ENCODE measurements at regions of chr20 and their contacts with region 1.

Region 1: GRCh38 chr20:10225439-10226060 is 6.9 kb downstream of the SNAP25 start:
- DNase-seq: no peak
- H3K4me3 ChIP-seq: no peak overlapping the region
- H3K27ac ChIP-seq: no peak overlapping the region
- H3K4me1 ChIP-seq: no peaks in the 10 kb centered on the region; a peak in 1 of 7 replicates
- H3K27me3 ChIP-seq: no peaks in the 10 kb centered on the region
- CTCF ChIP-seq: peak in 2 of 3 experiments; percentile 58 to 60; a peak in 3 of 4 replicates
- EP300 ChIP-seq: no peak
- POLR2A ChIP-seq: no peak
- RAD21 ChIP-seq: peak; percentile 63 to 71

Region 2: GRCh38 chr20:10236540-10237533 is 11.3 kb after region 1 on chr20:
- CTCF ChIA-PET with region 1: interaction called, 12 read pairs
- POLR2A ChIA-PET with region 1: no interaction called
- DNase-seq: no peak
- H3K4me3 ChIP-seq: no peak overlapping the region
- H3K27ac ChIP-seq: no peak overlapping the region
- H3K4me1 ChIP-seq: peaks cover 2 to 8% (median 3%) of the 10 kb centered on the region in 4 experiments; a peak in 5 of 7 replicates
- H3K27me3 ChIP-seq: no peaks in the 10 kb centered on the region
- CTCF ChIP-seq: no peak; a peak in 1 of 4 replicates
- EP300 ChIP-seq: no peak
- POLR2A ChIP-seq: no peak
- RAD21 ChIP-seq: peak in 1 of 2 experiments; percentile 20; a peak in 1 of 4 replicates

Region 3: GRCh38 chr20:10242166-10242565 is 16.6 kb after region 1 on chr20:
- CTCF ChIA-PET with region 1: interaction called, 12 read pairs
- POLR2A ChIA-PET with region 1: no interaction called
- DNase-seq: no peak
- H3K4me3 ChIP-seq: no peak overlapping the region
- H3K27ac ChIP-seq: no peak overlapping the region
- H3K4me1 ChIP-seq: peaks cover 2 to 8% (median 3%) of the 10 kb centered on the region in 4 experiments; a peak in 5 of 7 replicates
- H3K27me3 ChIP-seq: no peaks in the 10 kb centered on the region
- CTCF ChIP-seq: no peak
- EP300 ChIP-seq: no peak
- POLR2A ChIP-seq: no peak
- RAD21 ChIP-seq: no peak

Region 4: GRCh38 chr20:10253780-10254179 is 28.2 kb after region 1 on chr20:
- CTCF ChIA-PET with region 1: interaction called, 12 read pairs
- POLR2A ChIA-PET with region 1: no interaction called
- DNase-seq: no peak
- H3K4me3 ChIP-seq: no peak overlapping the region
- H3K27ac ChIP-seq: no peak overlapping the region
- H3K4me1 ChIP-seq: peaks cover 2 to 7% (median 4%) of the 10 kb centered on the region in 4 experiments; a peak in 5 of 7 replicates
- H3K27me3 ChIP-seq: peaks cover 0 to 1% (median 0%) of the 10 kb centered on the region in 4 experiments; a peak in 1 of 7 replicates
- CTCF ChIP-seq: no peak
- EP300 ChIP-seq: no peak
- POLR2A ChIP-seq: no peak
- RAD21 ChIP-seq: no peak